ENCODE measurements at regions of chr1 and their contacts with region 1.

Region 1: GRCh38 chr1:3856908-3857790 is at the starts of genes CEP104 and DFFB:
- DNase-seq: peak; percentile 92 to 99
- ATAC-seq: peak; percentile 90 to 94 (median 91)
- H3K4me3 ChIP-seq: peak within 1 kb of the TSS; percentile 81
- H3K4me3 Mint-ChIP-seq: peak within 1 kb of the TSS; percentile 98
- H3K27ac ChIP-seq: peak within 1 kb of the TSS; percentile 69
- H3K27ac Mint-ChIP-seq: peak within 1 kb of the TSS; percentile 85 to 92
- H3K4me1 ChIP-seq: peaks cover 25% of the 10 kb centered on the region
- H3K4me1 Mint-ChIP-seq: peaks cover 24 to 32% of the 10 kb centered on the region in 2 donors
- H3K27me3 ChIP-seq: no peaks in the 10 kb centered on the region
- H3K27me3 Mint-ChIP-seq: no peaks in the 10 kb centered on the region
- CTCF ChIP-seq: peak; percentile 24
- total RNA-seq, gene CEP104: 37.1 to 60.2 (median 51.8) TPM
- total RNA-seq, gene DFFB: 18.3 to 27.8 (median 18.5) TPM

Region 2: GRCh38 chr1:3796215-3797061 is 60.7 kb before region 1 on chr1 and contains the start of gene LRRC47:
- intact Hi-C with region 1: loop called (anchors 1 kb)
- DNase-seq: peak; percentile 92 to 95
- ATAC-seq: peak; percentile 99 to 100 (median 99)
- H3K4me3 ChIP-seq: peak within 1 kb of the TSS; percentile 44
- H3K4me3 Mint-ChIP-seq: peak within 1 kb of the TSS; percentile 90
- H3K27ac ChIP-seq: peak within 1 kb of the TSS; percentile 61
- H3K27ac Mint-ChIP-seq: peak within 1 kb of the TSS; percentile 61 to 85
- H3K4me1 ChIP-seq: peaks cover 33% of the 10 kb centered on the region
- H3K4me1 Mint-ChIP-seq: peaks cover 18 to 38% of the 10 kb centered on the region in 2 donors
- H3K27me3 ChIP-seq: no peaks in the 10 kb centered on the region
- H3K27me3 Mint-ChIP-seq: peaks cover 0 to 5% of the 10 kb centered on the region in 2 donors
- CTCF ChIP-seq: no peak
- total RNA-seq, gene LRRC47: 33.5 to 49.8 (median 45.2) TPM

Region 3: DNA sequence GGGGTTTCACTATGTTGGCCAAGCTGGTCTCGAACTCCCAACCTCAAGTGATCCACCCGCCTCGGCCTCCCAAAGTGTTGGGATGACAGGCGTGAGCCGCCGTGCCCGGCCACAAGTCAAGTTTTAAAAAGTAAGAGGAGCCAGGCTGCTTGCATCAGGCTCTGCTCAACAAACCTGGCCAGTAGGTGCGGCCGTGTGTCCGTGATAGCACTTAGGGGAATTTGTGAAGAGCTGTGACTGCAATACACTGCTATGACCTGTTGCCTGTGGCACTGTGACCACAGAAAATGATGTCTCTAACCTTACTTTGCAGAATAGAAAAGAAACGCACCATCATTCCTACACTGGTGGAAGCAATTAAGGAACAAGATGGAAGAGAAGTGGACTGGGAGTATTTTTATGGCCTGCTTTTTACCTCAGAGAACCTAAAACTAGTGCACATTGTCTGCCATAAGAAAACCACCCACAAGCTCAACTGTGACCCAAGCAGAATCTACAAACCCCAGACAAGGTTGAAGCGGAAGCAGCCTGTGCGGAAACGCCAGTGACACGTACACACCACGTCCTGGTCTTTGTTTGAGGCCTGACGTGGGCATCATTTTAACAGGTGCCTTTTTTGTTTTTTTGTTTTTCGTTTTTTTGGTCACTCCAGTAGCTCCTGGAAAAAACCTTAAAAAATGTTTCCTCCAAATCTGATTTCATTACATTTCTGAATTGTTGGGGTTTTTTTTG is 26.2 kb after region 1 on chr1:
- intact Hi-C with region 1: loop called (anchors 1 kb)
- DNase-seq: peak; percentile 45 to 72
- ATAC-seq: peak; percentile 83 to 89 (median 85)
- H3K4me3 ChIP-seq: no peak overlapping the region
- H3K4me3 Mint-ChIP-seq: peak overlapping the region; percentile 71
- H3K27ac ChIP-seq: peak overlapping the region; percentile 86
- H3K27ac Mint-ChIP-seq: peak overlapping the region; percentile 85 to 95
- H3K4me1 ChIP-seq: peaks cover 41% of the 10 kb centered on the region
- H3K4me1 Mint-ChIP-seq: peaks cover 23 to 33% of the 10 kb centered on the region in 2 donors
- H3K27me3 ChIP-seq: no peaks in the 10 kb centered on the region
- H3K27me3 Mint-ChIP-seq: no peaks in the 10 kb centered on the region
- CTCF ChIP-seq: peak; percentile 12

Region 4: GRCh38 chr1:4267381-4268261 is 410.5 kb after region 1 on chr1:
- intact Hi-C with region 1: no loop called
- DNase-seq: peak in 1 of 2 donors; percentile 5
- ATAC-seq: peak in 1 of 3 donors; percentile 26
- H3K4me3 ChIP-seq: no peak overlapping the region
- H3K4me3 Mint-ChIP-seq: no peak overlapping the region
- H3K27ac ChIP-seq: no peak overlapping the region
- H3K27ac Mint-ChIP-seq: no peak overlapping the region
- H3K4me1 ChIP-seq: no peaks in the 10 kb centered on the region
- H3K4me1 Mint-ChIP-seq: peaks cover 0 to 5% of the 10 kb centered on the region in 2 donors
- H3K27me3 ChIP-seq: no peaks in the 10 kb centered on the region
- H3K27me3 Mint-ChIP-seq: peaks cover 0 to 7% of the 10 kb centered on the region in 2 donors
- CTCF ChIP-seq: no peak

Measured in natural killer cell (primary cell).